ENCODE measurements at regions of chr18 and their contacts with region 1.

Region 1: GRCh38 chr18:36809590-36810381 is 19.0 kb downstream of the TPGS2 start:
- DNase-seq: peak; percentile 12
- H3K4me3 Mint-ChIP-seq: no peak overlapping the region
- H3K27ac Mint-ChIP-seq: no peak overlapping the region
- H3K4me1 Mint-ChIP-seq: peaks cover 19% of the 10 kb centered on the region
- H3K27me3 Mint-ChIP-seq: no peaks in the 10 kb centered on the region

Region 2: GRCh38 chr18:36095936-36096519 is 713.8 kb before region 1 on chr18:
- intact Hi-C with region 1: loop called (anchors 1 kb)
- DNase-seq: no peak
- H3K4me3 Mint-ChIP-seq: no peak overlapping the region
- H3K27ac Mint-ChIP-seq: no peak overlapping the region
- H3K4me1 Mint-ChIP-seq: peaks cover 7% of the 10 kb centered on the region
- H3K27me3 Mint-ChIP-seq: peaks cover 14% of the 10 kb centered on the region

Region 3: GRCh38 chr18:36769611-36770314 is 40.0 kb before region 1 on chr18:
- intact Hi-C with region 1: loop called (anchors 2 kb)
- DNase-seq: no peak
- H3K4me3 Mint-ChIP-seq: no peak overlapping the region
- H3K27ac Mint-ChIP-seq: no peak overlapping the region
- H3K4me1 Mint-ChIP-seq: peaks cover 9% of the 10 kb centered on the region
- H3K27me3 Mint-ChIP-seq: peaks cover 2% of the 10 kb centered on the region

Region 4: GRCh38 chr18:36798738-36799473 is 10.9 kb before region 1 on chr18:
- intact Hi-C with region 1: no loop called
- DNase-seq: no peak
- H3K4me3 Mint-ChIP-seq: no peak overlapping the region
- H3K27ac Mint-ChIP-seq: peak overlapping the region; percentile 6
- H3K4me1 Mint-ChIP-seq: no peaks in the 10 kb centered on the region
- H3K27me3 Mint-ChIP-seq: no peaks in the 10 kb centered on the region

Measured in activated T-helper 1 cell treated with anti-CD3 and anti-CD28 coated beads, Interleukin-12 subunit alpha, Interleukin-12 subunit beta, Interleukin-2, Interleukin-4 antibody, amounts not matched to agents 30 ng/mL and 10 ng/mL and 1 ng/mL, durations not matched to agents 14 hours and 24 hours and 36 hours (primary cell).